CD8-positive, alpha-beta T cell (primary cell): ENCODE measurements at regions of chr6 and their contacts with region 1.

Region 1: GRCh38 chr6:150891888-150892485 is 26.5 kb downstream of the MTHFD1L start:
- DNase-seq: peak; percentile 36 to 72 (median 58)
- ATAC-seq: peak; percentile 71
- H3K4me3 ChIP-seq: no peak overlapping the region
- H3K4me3 Mint-ChIP-seq: no peak overlapping the region
- H3K27ac ChIP-seq: no peak overlapping the region
- H3K27ac Mint-ChIP-seq: no peak overlapping the region
- H3K4me1 ChIP-seq: peaks cover 8% of the 10 kb centered on the region
- H3K4me1 Mint-ChIP-seq: peaks cover 15% of the 10 kb centered on the region
- H3K27me3 ChIP-seq: no peaks in the 10 kb centered on the region
- H3K27me3 Mint-ChIP-seq: no peaks in the 10 kb centered on the region
- CTCF ChIP-seq: peak; percentile 78

Region 2: GRCh38 chr6:150865406-150866146 is 26.4 kb before region 1 on chr6 and contains the start of gene MTHFD1L:
- CTCF ChIA-PET with region 1: interaction called, 10 read pairs
- POLR2A ChIA-PET with region 1: no interaction called
- intact Hi-C with region 1: no loop called
- DNase-seq: peak; percentile 24 to 82 (median 64)
- ATAC-seq: peak; percentile 71
- H3K4me3 ChIP-seq: peak within 1 kb of the TSS; percentile 53 to 61
- H3K4me3 Mint-ChIP-seq: peak within 1 kb of the TSS; percentile 85
- H3K27ac ChIP-seq: peak within 1 kb of the TSS in 1 of 2 experiments; percentile 48
- H3K27ac Mint-ChIP-seq: peak within 1 kb of the TSS; percentile 77
- H3K4me1 ChIP-seq: peaks cover 12% of the 10 kb centered on the region
- H3K4me1 Mint-ChIP-seq: peaks cover 9% of the 10 kb centered on the region
- H3K27me3 ChIP-seq: no peaks in the 10 kb centered on the region
- H3K27me3 Mint-ChIP-seq: peaks cover 17% of the 10 kb centered on the region
- CTCF ChIP-seq: peak; percentile 26
- total RNA-seq, gene MTHFD1L: 7.8 to 9.6 TPM

Region 3: GRCh38 chr6:151014404-151015100 is 122.6 kb after region 1 on chr6:
- CTCF ChIA-PET with region 1: interaction called, 6 read pairs
- POLR2A ChIA-PET with region 1: no interaction called
- intact Hi-C with region 1: loop called in 1 of 2 experiments (anchors 10 kb)
- DNase-seq: peak; percentile 12 to 74 (median 57)
- ATAC-seq: peak; percentile 77
- H3K4me3 ChIP-seq: no peak overlapping the region
- H3K4me3 Mint-ChIP-seq: peak overlapping the region; percentile 27
- H3K27ac ChIP-seq: no peak overlapping the region
- H3K27ac Mint-ChIP-seq: no peak overlapping the region
- H3K4me1 ChIP-seq: no peaks in the 10 kb centered on the region
- H3K4me1 Mint-ChIP-seq: peaks cover 3% of the 10 kb centered on the region
- H3K27me3 ChIP-seq: no peaks in the 10 kb centered on the region
- H3K27me3 Mint-ChIP-seq: no peaks in the 10 kb centered on the region
- CTCF ChIP-seq: peak; percentile 94

Region 4: DNA sequence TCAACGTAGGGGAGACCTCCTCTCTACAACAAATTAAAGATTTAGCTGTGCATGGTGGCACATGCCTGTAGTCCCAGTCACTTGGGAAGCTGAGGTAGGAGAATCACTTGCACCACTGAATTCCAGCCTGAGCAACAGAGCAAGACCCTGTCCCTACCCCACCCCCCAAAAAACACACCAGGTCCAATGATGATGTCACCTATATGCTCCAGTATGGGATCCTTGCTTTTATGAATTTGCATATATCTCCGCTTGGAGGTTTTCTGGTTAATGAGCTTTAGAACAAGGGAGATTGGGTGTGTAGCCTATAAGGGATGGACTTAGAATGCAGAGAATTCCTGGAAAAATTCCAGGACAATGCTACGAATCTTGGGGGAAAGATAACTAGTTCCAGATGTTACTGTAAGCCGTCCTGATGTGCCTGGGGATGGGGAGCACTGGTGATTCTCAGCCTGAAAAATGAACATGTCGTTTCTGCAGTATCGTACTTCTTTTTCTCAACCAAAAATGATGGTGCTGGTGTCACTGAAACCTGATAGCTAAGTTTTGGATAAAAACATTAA is 438.2 kb after region 1 on chr6:
- CTCF ChIA-PET with region 1: interaction called, 242 read pairs
- POLR2A ChIA-PET with region 1: interaction called, 4 read pairs
- intact Hi-C with region 1: loop called (anchors 1 kb)
- DNase-seq: no peak
- ATAC-seq: no peak
- H3K4me3 ChIP-seq: no peak overlapping the region
- H3K4me3 Mint-ChIP-seq: no peak overlapping the region
- H3K27ac ChIP-seq: no peak overlapping the region
- H3K27ac Mint-ChIP-seq: no peak overlapping the region
- H3K4me1 ChIP-seq: peaks cover 7% of the 10 kb centered on the region
- H3K4me1 Mint-ChIP-seq: peaks cover 12% of the 10 kb centered on the region
- H3K27me3 ChIP-seq: peaks cover 0 to 10% of the 10 kb centered on the region in 2 experiments
- H3K27me3 Mint-ChIP-seq: peaks cover 33% of the 10 kb centered on the region
- CTCF ChIP-seq: no peak

Region 5: GRCh38 chr6:151335930-151336329 is 443.9 kb after region 1 on chr6:
- CTCF ChIA-PET with region 1: interaction called, 125 read pairs
- POLR2A ChIA-PET with region 1: no interaction called
- intact Hi-C with region 1: loop called (anchors 1 kb)
- DNase-seq: no peak
- ATAC-seq: no peak
- H3K4me3 ChIP-seq: no peak overlapping the region
- H3K4me3 Mint-ChIP-seq: no peak overlapping the region
- H3K27ac ChIP-seq: no peak overlapping the region
- H3K27ac Mint-ChIP-seq: no peak overlapping the region
- H3K4me1 ChIP-seq: no peaks in the 10 kb centered on the region
- H3K4me1 Mint-ChIP-seq: peaks cover 4% of the 10 kb centered on the region
- H3K27me3 ChIP-seq: no peaks in the 10 kb centered on the region
- H3K27me3 Mint-ChIP-seq: peaks cover 2% of the 10 kb centered on the region
- CTCF ChIP-seq: no peak